OCI-LY7 (cell line): ENCODE measurements at regions of chr19 and their contacts with region 1.

Region 1: DNA sequence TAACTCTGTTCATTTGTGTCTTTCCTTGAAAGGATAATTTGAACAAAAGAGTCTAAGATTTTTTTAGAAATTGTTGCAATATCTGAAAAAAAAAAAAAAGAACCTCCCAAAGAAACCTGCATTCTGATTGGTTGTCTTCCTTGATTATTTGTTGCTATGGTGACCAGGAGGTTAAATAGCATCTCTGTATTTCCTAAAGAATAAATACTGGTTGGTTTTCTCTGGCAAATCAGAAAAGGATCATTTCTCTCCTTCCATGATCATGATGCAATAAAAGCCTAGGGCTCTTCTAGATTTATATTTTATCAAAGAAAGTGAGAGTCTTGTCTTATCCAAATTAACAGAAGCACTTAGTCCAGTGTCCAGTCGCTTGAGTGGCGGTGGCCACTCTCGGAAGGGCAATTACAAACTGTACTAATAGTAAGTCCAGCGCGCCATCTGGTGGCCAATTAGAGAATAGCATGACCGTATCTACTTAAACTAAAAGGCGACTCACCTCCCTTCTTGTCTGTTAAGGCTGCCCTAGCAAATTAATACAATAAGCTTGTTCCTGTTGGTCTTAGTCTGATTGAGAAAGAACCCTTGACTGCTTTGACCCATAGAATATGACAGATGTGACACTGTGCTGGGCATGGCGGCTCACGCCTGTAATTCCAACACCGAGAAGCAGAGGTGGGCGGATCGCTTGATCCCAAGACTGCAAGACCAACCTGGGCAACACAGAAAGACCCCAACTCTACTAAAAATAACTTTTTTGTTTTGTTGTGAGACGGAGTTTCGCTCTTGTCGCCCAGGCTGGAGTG is 47.0 kb upstream of the PNMA8B start:
- DNase-seq: peak; percentile 88
- H3K4me3 ChIP-seq: no peak overlapping the region
- H3K27ac ChIP-seq: no peak overlapping the region
- H3K4me1 ChIP-seq: no peaks in the 10 kb centered on the region
- CTCF ChIP-seq: peak; percentile 99

Region 2: DNA sequence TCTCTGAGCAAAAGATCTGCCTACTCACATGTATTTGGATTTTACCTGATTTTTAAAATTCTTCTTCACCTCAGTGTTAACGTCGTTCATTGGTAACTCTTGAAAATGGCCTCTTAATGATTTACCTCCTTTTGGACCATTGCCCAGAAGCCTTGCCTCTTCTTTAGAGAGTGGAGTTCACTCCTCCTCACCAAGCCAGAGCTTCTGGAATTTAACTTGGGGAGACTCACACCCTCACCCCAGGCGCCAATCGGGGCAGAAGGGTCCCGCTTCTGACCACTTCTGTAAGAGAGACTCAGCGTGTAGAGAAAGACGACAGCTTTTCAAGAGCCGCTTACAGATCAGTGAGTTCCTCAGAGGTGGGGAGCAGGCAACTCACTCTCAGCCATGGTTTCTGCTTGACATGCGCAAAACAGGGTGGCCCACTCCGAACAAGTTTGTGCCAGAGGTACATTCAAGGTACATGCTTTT is 116.6 kb before region 1 on chr19:
- CTCF ChIA-PET with region 1: no interaction called
- POLR2A ChIA-PET with region 1: no interaction called
- intact Hi-C with region 1: no loop called
- DNase-seq: no peak
- H3K4me3 ChIP-seq: peak overlapping the region; percentile 64
- H3K27ac ChIP-seq: no peak overlapping the region
- H3K4me1 ChIP-seq: peaks cover 65% of the 10 kb centered on the region
- CTCF ChIP-seq: no peak

Region 3: DNA sequence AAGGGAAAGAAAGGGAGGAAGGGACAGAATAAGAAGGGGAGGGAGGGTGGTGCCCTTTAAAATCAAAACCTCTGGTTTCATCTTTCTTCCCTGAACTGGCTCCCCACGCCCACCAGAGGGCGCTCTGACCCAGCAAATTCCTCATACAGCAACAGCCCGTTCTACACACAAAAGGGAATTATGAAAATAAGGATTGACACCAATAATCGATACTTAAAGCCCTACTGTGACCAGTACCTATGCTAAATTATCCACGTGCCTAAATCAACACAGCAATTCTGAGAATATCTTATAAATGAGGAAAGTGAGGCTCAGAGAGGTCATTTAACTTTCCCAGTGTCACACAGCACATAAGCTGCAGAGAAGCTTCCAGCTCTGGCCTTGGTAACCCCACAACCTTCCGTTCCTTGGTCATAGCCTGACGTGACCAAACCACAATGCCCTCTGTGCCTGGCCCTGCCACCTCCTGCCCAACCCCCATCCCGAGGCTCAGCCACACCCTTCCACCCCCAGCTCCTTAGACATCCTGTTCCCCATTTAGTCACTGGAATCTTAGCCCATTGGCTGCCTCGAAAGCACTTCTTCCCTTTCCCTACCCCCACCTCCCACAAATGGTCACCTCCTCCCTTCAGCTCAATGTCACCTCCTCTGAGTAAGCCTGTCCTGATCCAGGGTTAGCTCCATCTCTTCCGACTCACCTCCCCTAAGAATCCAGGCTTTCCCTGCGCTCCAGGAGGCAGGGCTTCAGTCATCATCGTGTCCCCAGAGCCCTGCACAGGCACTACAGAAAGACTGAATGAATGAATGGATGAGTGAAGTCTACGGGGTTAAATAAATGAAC is 12.8 kb before region 1 on chr19:
- CTCF ChIA-PET with region 1: no interaction called
- POLR2A ChIA-PET with region 1: interaction called, 4 read pairs
- intact Hi-C with region 1: loop called (anchors 1 kb)
- DNase-seq: peak; percentile 65
- H3K4me3 ChIP-seq: no peak overlapping the region
- H3K27ac ChIP-seq: no peak overlapping the region
- H3K4me1 ChIP-seq: no peaks in the 10 kb centered on the region
- CTCF ChIP-seq: peak; percentile 100